Activated B cell treated with CpG ODN at 0.5 μM for 24 hours (primary cell): ENCODE measurements at regions of chr16 and their contacts with region 1.

Region 1: DNA sequence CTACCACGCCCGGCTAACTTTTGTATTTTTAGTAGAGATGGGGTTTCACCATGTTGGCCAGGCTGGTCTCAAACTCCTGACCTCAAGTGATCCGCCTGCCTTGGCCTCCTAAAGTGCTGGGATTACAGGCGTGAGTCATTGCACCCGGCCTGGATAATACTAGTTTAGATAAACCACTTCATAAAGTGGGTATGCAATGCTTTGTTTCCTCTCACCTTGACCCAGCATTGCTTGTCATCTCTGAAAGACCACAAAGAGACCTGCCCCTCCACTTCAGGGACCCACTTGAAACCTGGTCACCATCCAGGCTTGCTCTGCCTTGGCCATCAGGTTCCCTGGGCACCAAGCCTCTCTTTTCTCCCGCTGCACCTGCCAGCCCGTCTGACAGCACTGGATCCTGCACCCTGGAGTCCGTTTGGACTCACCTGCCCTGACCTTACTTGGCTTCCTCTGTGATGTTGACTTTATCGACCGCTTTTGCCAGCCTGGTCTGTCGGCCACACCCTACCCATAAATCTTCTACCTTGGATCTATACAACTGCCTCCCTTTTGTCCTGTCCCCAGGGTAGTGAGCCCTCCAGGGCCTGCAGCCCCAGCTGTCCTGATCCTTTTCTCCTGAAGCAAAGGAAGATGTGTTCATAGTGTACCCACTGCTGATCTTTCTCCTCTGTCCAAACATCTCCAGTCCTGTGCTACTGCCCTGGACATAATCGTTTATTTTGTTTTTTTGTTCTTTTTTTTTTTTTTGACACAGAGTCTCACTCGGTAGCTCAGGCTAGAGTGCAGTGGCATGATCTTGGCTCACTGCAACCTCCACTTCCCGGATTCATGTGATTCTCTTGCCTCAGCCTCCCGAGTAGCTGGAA is 12.7 kb upstream of the ZG16 start:
- DNase-seq: no peak
- ATAC-seq: no peak
- H3K4me3 Mint-ChIP-seq: no peak overlapping the region
- H3K27ac Mint-ChIP-seq: no peak overlapping the region
- H3K4me1 Mint-ChIP-seq: no peaks in the 10 kb centered on the region
- H3K27me3 Mint-ChIP-seq: no peaks in the 10 kb centered on the region
- CTCF ChIP-seq: no peak

Region 2: GRCh38 chr16:29915590-29916247 is 150.3 kb after region 1 on chr16:
- CTCF ChIA-PET with region 1: no interaction called
- POLR2A ChIA-PET with region 1: interaction called, 10 read pairs
- intact Hi-C with region 1: no loop called
- DNase-seq: no peak
- ATAC-seq: no peak
- H3K4me3 Mint-ChIP-seq: no peak overlapping the region
- H3K27ac Mint-ChIP-seq: no peak overlapping the region
- H3K4me1 Mint-ChIP-seq: peaks cover 3% of the 10 kb centered on the region
- H3K27me3 Mint-ChIP-seq: no peaks in the 10 kb centered on the region
- CTCF ChIP-seq: no peak